Activated CD4-positive, alpha-beta T cell treated with anti-CD3 and anti-CD28 coated beads for 36 hours (primary cell): ENCODE measurements at regions of chr17 and their contacts with region 1.

Region 1: DNA sequence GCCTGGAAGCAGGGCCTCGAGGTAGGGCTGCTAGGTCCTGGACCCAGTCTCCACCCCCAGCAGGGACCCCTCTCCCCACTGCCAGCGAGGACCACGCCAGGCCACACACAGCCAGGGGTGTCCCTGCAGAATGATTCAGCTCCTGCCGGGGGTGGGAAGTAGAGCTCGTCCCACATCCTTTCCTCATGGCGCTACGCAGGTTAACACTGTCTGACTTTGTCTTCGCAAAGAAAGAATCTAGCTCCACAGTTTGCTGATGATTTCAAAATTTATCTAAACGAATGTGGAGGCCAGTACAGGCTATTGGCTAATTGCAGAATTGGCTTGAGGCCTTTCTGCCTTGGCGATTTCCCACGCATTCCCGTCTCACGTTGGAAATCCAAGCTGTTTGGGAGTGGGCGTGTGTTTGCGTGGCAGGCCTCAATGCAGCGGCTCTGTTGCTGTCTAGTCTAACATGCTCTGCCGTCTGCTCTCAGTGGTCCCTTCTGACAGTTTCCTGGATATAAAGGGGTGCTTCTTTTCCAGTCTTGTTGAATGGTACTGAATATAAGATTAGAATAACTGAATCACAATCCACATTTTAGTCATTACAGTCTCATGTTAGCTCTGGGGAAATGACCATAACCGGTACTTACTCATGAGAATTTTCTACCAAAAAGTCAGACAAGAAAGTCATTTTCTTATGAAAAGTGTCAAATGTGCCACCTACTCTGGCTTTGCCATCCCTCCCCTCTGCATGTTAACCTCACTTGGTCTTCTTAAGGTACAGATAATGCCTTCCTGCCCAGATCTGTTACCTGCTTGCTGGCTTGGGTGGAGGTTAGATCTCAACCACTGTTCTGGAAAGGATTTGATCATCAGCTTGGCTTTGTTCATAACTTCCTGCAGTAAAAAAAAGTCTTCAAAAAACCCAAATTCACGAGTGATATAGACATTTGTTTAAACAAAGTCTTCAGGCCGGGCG is 252.4 kb downstream of the NTN1 start:
- DNase-seq: peak; percentile 73
- ATAC-seq: peak; percentile 94
- H3K4me3 Mint-ChIP-seq: peak overlapping the region; percentile 55
- H3K27ac Mint-ChIP-seq: peak overlapping the region; percentile 91
- H3K4me1 Mint-ChIP-seq: peaks cover 32% of the 10 kb centered on the region
- H3K27me3 Mint-ChIP-seq: no peaks in the 10 kb centered on the region

Region 2: GRCh38 chr17:8941520-8941919 is 332.2 kb before region 1 on chr17:
- CTCF ChIA-PET with region 1: no interaction called
- POLR2A ChIA-PET with region 1: no interaction called
- intact Hi-C with region 1: loop called in 1 of 2 experiments (anchors 5 kb)
- DNase-seq: peak; percentile 84
- ATAC-seq: peak; percentile 51
- H3K4me3 Mint-ChIP-seq: peak overlapping the region; percentile 52
- H3K27ac Mint-ChIP-seq: peak overlapping the region; percentile 89
- H3K4me1 Mint-ChIP-seq: peaks cover 75% of the 10 kb centered on the region
- H3K27me3 Mint-ChIP-seq: no peaks in the 10 kb centered on the region

Region 3: DNA sequence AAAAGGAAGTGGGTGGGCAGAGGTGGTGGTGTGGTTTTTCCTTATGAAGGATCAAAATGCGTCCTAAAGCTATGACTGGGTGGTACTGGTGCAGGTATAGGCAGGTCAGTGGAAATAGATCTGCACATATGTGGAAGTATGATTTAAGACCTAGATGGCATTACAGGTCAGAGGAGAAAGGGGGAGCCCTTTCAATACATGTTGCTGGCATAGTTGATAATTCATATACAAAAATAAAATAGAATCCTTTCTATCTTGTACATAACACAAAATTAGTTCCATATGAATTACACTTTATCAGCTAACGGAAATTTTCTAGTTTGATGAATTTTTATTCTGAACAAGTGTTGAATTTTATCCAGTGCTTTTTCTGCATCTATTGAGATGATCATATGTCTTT is 287.4 kb before region 1 on chr17:
- CTCF ChIA-PET with region 1: no interaction called
- POLR2A ChIA-PET with region 1: no interaction called
- intact Hi-C with region 1: no loop called
- DNase-seq: no peak
- ATAC-seq: no peak
- H3K4me3 Mint-ChIP-seq: no peak overlapping the region
- H3K27ac Mint-ChIP-seq: no peak overlapping the region
- H3K4me1 Mint-ChIP-seq: peaks cover 12% of the 10 kb centered on the region
- H3K27me3 Mint-ChIP-seq: peaks cover under 1% of the 10 kb centered on the region

Region 4: GRCh38 chr17:9115446-9116191 is 158.1 kb before region 1 on chr17:
- CTCF ChIA-PET with region 1: no interaction called
- POLR2A ChIA-PET with region 1: interaction called, 4 read pairs
- intact Hi-C with region 1: loop called in 1 of 2 experiments (anchors 5 kb)
- DNase-seq: peak; percentile 82
- ATAC-seq: peak; percentile 95
- H3K4me3 Mint-ChIP-seq: peak overlapping the region; percentile 59
- H3K27ac Mint-ChIP-seq: peak overlapping the region; percentile 80
- H3K4me1 Mint-ChIP-seq: peaks cover 16% of the 10 kb centered on the region
- H3K27me3 Mint-ChIP-seq: no peaks in the 10 kb centered on the region

Region 5: DNA sequence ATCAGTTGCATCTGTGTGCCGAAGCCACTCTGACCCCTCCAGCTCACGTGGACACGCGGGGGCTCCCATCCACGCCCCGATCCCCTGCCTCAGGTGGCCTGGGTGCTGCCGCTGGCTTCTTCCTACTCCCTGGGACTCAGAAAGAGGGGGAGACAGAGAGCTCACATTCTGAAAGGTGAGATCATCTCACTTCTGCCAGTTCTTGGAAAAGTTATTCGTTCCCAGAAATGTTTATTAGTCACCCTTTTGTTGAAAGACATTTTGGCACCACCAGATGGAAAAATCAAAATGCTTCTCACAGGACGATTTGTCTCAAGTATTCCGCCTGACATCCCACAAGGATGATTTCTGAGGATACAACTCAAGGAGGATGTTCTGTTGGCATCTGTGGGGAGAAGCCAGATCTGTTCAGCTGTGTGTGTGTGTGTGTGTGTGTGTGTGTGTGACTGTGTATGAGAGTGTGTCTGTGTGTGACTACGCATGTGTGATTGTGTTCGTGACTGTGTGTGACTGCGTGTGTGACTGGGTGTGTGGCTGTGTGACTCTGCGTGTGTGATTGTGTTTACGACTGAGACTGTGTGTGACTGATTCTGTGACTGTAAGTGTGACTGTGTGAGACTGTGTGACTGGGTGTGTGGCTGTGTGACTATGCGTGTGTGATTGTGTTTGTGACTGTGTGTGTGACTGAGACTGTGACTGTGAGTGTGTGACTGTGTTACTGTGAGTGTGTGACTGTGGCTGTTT is 45.1 kb before region 1 on chr17:
- CTCF ChIA-PET with region 1: interaction called, 6 read pairs
- POLR2A ChIA-PET with region 1: no interaction called
- intact Hi-C with region 1: loop called in 1 of 2 experiments (anchors 2 kb)
- DNase-seq: peak; percentile 26
- ATAC-seq: peak; percentile 67
- H3K4me3 Mint-ChIP-seq: no peak overlapping the region
- H3K27ac Mint-ChIP-seq: no peak overlapping the region
- H3K4me1 Mint-ChIP-seq: peaks cover 2% of the 10 kb centered on the region
- H3K27me3 Mint-ChIP-seq: no peaks in the 10 kb centered on the region

Region 6: DNA sequence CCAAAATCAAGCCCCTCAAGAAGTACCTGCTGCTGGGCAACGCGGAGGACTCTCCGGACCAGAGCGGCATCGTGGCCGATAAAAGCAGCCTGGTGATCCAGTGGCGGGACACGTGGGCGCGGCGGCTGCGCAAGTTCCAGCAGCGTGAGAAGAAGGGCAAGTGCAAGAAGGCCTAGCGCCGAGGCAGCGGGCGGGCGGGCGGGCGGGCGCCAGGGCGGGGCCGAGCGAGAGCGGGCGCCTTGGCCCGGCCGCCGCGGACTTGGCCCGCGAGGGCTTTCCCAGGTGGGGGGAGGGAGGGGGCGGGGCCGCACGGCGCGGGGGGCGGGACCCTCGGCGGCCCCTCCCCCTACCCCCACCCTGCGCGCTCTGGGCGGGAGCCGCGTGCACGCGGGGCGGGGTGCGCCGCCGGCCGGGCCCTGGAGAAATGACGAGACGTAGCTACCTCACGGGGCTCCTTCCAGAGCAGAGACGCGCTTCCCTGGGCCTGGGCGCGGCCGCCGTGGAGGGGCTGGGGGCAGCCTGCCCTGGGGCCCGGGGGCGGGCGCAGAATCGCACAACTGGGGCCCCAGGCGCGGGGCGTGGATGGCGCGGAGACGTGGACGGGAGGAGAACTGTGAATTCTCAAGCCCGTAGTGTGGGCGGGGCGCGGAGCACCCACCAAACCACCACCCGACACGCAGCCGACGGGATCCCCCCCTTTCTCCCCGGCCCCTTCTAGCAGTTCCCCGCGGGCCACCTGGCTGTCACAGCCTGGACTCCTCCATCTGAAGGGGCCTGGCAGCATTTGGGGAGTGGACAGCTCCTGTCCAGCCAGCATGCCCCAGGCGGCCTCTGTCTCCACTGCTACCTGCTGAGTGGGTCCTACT is 33.7 kb before region 1 on chr17:
- CTCF ChIA-PET with region 1: no interaction called
- POLR2A ChIA-PET with region 1: no interaction called
- intact Hi-C with region 1: loop called in 1 of 2 experiments (anchors 1 kb)
- DNase-seq: peak; percentile 85
- ATAC-seq: peak; percentile 84
- H3K4me3 Mint-ChIP-seq: peak overlapping the region; percentile 73
- H3K27ac Mint-ChIP-seq: peak overlapping the region; percentile 82
- H3K4me1 Mint-ChIP-seq: peaks cover 20% of the 10 kb centered on the region
- H3K27me3 Mint-ChIP-seq: no peaks in the 10 kb centered on the region

Region 7: GRCh38 chr17:9256751-9257629 is 16.7 kb before region 1 on chr17:
- CTCF ChIA-PET with region 1: interaction called, 6 read pairs
- POLR2A ChIA-PET with region 1: interaction called, 9 read pairs
- intact Hi-C with region 1: loop called (anchors 1 to 2 kb)
- DNase-seq: no peak
- ATAC-seq: no peak
- H3K4me3 Mint-ChIP-seq: no peak overlapping the region
- H3K27ac Mint-ChIP-seq: no peak overlapping the region
- H3K4me1 Mint-ChIP-seq: peaks cover 67% of the 10 kb centered on the region
- H3K27me3 Mint-ChIP-seq: no peaks in the 10 kb centered on the region

Region 8: GRCh38 chr17:9361188-9361955 is 87.7 kb after region 1 on chr17:
- CTCF ChIA-PET with region 1: no interaction called
- POLR2A ChIA-PET with region 1: no interaction called
- intact Hi-C with region 1: loop called in 1 of 2 experiments (anchors 1 kb)
- DNase-seq: no peak
- ATAC-seq: no peak
- H3K4me3 Mint-ChIP-seq: no peak overlapping the region
- H3K27ac Mint-ChIP-seq: no peak overlapping the region
- H3K4me1 Mint-ChIP-seq: peaks cover 14% of the 10 kb centered on the region
- H3K27me3 Mint-ChIP-seq: no peaks in the 10 kb centered on the region

Region 9: DNA sequence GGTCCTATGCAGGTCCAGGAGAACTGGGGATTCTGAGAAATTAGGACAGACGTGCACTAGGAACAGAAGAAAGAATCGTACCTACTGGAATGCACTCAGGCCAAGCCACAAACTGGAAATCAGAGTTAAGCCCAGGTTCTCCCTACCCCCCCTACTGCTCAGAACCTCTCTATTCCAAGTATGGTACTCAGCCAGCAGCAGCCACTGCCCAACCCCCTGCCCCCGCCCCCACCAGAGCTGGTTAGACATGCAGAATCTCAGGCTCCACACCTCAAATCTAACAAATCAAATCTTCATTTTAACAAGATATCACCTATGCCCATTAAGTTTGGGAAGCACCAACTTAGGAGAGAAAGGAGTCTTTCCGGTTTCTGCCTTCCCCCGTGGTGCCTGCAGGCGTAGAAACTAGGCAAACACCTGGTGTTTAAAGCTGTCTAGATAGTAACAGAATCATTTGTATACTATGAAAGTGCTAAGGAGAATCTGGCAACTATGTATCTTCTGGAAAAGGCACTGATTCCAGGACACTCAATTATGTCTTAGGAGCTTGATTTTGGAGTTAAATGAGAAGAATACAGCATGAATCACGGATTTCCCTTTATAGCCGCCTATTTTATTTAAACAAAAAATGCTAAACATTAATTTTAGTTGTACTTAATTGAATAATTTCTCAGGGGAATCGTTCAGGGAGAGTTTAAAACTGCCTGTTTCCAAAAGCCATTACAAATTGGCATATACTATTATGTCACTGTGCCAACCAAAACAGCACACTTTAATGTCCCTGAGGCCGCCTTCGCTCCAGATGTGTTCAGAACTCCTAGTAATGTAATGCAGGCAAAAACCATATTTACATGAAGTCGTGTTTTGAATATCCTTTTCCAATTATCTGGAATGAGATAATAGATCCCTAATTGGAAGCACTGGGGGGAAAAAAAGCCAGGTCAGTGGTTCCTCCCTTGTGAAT is 135.4 kb after region 1 on chr17:
- CTCF ChIA-PET with region 1: no interaction called
- POLR2A ChIA-PET with region 1: no interaction called
- intact Hi-C with region 1: no loop called
- DNase-seq: no peak
- ATAC-seq: no peak
- H3K4me3 Mint-ChIP-seq: no peak overlapping the region
- H3K27ac Mint-ChIP-seq: no peak overlapping the region
- H3K4me1 Mint-ChIP-seq: no peaks in the 10 kb centered on the region
- H3K27me3 Mint-ChIP-seq: no peaks in the 10 kb centered on the region